OCI-LY7 (cell line): ENCODE measurements at regions of chr4 and their contacts with region 1.

Region 1: GRCh38 chr4:742742-743311 is 37.2 kb downstream of the PCGF3 start:
- DNase-seq: peak; percentile 74
- H3K4me3 ChIP-seq: no peak overlapping the region
- H3K27ac ChIP-seq: no peak overlapping the region
- H3K4me1 ChIP-seq: peaks cover 10% of the 10 kb centered on the region
- CTCF ChIP-seq: peak; percentile 96

Region 2: DNA sequence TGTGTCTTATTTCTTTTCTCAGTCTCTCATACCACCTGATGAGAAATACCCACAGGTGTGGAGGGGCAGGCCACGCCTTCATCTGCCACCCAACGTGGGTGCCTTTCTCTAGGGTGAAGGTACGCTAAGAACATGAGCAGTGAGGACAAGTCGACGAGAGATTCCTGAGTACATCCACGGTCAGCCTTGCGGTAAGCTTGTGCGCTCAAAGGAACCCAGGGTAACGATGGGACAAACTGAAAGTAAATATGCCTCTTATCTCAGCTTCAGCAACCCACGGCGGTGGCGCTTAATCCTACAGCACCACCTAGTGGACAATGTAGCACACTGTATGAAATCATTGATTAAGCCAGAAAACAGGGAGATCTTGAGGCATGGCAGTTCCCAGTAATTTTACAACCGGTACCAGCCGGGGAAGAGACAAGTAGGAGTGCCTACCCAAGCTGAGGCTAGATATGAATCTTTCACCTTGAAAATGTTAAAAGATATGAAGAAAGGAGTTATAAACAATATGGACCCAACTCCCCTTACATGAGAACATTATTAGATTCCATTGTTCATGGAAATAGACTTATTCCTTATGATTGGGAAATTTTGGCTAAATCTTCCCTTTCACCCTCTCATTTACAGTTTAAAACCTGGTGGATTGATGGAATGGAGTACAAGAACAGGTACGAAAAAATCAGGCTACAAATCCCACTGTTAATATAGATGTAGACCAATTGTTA is 500.5 kb before region 1 on chr4:
- CTCF ChIA-PET with region 1: no interaction called
- POLR2A ChIA-PET with region 1: no interaction called
- intact Hi-C with region 1: loop called (anchors 5 kb)
- DNase-seq: peak; percentile 84
- H3K4me3 ChIP-seq: peak overlapping the region; percentile 34
- H3K27ac ChIP-seq: no peak overlapping the region
- H3K4me1 ChIP-seq: no peaks in the 10 kb centered on the region
- CTCF ChIP-seq: peak; percentile 93

Region 3: GRCh38 chr4:634121-634985 is 108.5 kb before region 1 on chr4:
- CTCF ChIA-PET with region 1: interaction called, 10 read pairs
- POLR2A ChIA-PET with region 1: no interaction called
- intact Hi-C with region 1: no loop called
- DNase-seq: no peak
- H3K4me3 ChIP-seq: no peak overlapping the region
- H3K27ac ChIP-seq: no peak overlapping the region
- H3K4me1 ChIP-seq: no peaks in the 10 kb centered on the region
- CTCF ChIP-seq: no peak

Region 4: DNA sequence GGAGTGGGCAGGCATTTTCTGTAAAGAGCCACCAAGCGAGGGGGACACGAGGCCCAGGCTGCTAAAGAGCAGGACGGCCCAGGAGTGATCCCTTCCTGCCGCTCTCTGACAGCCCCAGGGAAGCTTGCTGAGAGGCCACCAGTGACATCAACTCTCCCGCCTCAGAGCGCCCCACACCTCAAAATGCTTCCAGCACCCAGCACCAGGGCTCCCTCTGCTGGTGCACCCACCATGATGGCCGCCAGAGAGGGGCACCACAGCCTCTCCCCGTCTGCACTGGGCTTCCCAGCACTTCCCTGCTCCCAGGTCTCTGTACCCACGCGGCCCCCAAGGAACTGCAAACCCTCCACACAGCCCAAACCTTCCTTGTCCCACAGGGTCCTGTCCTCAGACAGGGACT is 148.9 kb after region 1 on chr4:
- CTCF ChIA-PET with region 1: interaction called, 3 read pairs
- POLR2A ChIA-PET with region 1: no interaction called
- intact Hi-C with region 1: loop called (anchors 5 kb)
- DNase-seq: peak; percentile 38
- H3K4me3 ChIP-seq: no peak overlapping the region
- H3K27ac ChIP-seq: no peak overlapping the region
- H3K4me1 ChIP-seq: no peaks in the 10 kb centered on the region
- CTCF ChIP-seq: peak; percentile 65

Region 5: DNA sequence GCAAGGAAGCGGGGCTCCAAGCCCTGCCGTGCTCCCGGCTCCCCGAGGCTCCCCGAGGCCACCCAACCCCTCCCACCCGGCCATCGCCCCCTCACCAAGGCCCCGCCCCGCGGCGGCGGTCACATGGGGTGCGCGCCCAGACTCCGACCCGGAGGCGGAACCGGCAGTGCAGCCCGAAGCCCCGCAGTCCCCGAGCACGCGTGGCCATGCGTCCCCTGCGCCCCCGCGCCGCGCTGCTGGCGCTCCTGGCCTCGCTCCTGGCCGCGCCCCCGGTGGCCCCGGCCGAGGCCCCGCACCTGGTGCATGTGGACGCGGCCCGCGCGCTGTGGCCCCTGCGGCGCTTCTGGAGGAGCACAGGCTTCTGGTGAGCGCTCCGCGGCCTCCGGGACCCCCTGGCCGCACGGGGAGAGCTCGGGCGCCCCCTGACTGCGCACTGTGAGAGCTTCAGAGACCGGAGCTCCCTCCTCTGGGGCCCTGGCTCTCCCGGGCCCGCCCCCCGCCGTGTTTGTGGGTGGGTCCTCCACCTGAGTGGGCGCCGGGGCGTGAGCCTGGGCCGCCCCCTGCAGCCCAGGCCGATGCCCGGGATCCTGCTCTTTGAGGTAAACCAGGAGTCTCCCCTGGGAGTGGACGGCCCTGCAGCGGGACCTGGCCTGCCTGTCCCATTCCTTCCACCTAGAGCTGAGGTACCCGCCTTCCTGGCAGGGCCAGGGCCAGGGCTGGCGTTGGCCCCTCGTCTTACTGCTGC is 244.2 kb after region 1 on chr4 and contains the start of gene IDUA:
- CTCF ChIA-PET with region 1: no interaction called
- POLR2A ChIA-PET with region 1: no interaction called
- intact Hi-C with region 1: loop called (anchors 2 kb)
- DNase-seq: peak; percentile 90
- H3K4me3 ChIP-seq: peak within 1 kb of the TSS; percentile 67
- H3K27ac ChIP-seq: no peak within 1 kb of the TSS
- H3K4me1 ChIP-seq: no peaks in the 10 kb centered on the region
- CTCF ChIP-seq: peak; percentile 85
- total RNA-seq, gene IDUA: 9.3 and 15.7 TPM in 2 replicates